ENCODE measurements at regions of chr10 and their contacts with region 1.

Region 1: GRCh38 chr10:74432841-74433594 is 282.0 kb downstream of the ADK start:
- DNase-seq: no peak
- ATAC-seq: no peak
- H3K4me3 ChIP-seq: no peak overlapping the region
- H3K4me3 Mint-ChIP-seq: no peak overlapping the region
- H3K27ac ChIP-seq: no peak overlapping the region
- H3K27ac Mint-ChIP-seq: no peak overlapping the region
- H3K4me1 ChIP-seq: no peaks in the 10 kb centered on the region
- H3K4me1 Mint-ChIP-seq: peaks cover 7 to 14% (median 11%) of the 10 kb centered on the region in 3 donors
- H3K27me3 ChIP-seq: no peaks in the 10 kb centered on the region
- H3K27me3 Mint-ChIP-seq: no peaks in the 10 kb centered on the region

Region 2: GRCh38 chr10:74474022-74474713 is 41.1 kb after region 1 on chr10:
- CTCF ChIA-PET with region 1: no interaction called
- POLR2A ChIA-PET with region 1: interaction called in 1 of 2 experiments, 14 read pairs
- DNase-seq: no peak
- ATAC-seq: no peak
- H3K4me3 ChIP-seq: no peak overlapping the region
- H3K4me3 Mint-ChIP-seq: no peak overlapping the region
- H3K27ac ChIP-seq: no peak overlapping the region
- H3K27ac Mint-ChIP-seq: no peak overlapping the region
- H3K4me1 ChIP-seq: no peaks in the 10 kb centered on the region
- H3K4me1 Mint-ChIP-seq: peaks cover 0 to 2% (median 0%) of the 10 kb centered on the region in 3 donors
- H3K27me3 ChIP-seq: no peaks in the 10 kb centered on the region
- H3K27me3 Mint-ChIP-seq: no peaks in the 10 kb centered on the region

Region 3: DNA sequence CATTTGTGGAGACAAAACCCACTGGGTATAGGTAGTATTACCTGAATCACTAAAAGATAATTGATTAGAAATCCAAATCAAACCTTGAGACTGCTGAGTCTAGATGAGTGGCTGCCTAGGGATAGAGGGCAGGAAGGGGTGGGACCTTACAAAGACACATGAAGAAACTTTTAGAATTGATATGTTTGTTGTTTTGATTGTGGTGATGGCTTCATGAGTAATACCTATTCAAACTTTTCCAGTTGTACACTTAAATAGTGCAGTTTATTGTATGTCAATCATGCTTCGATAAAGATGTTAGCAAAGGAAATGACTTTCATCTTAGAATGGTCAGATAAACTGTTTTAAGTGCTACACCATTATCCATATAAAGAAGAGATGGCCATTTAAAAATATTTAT is 204.7 kb after region 1 on chr10:
- CTCF ChIA-PET with region 1: interaction called in 1 of 2 experiments, 12 read pairs
- POLR2A ChIA-PET with region 1: no interaction called
- DNase-seq: no peak
- ATAC-seq: no peak
- H3K4me3 ChIP-seq: no peak overlapping the region
- H3K4me3 Mint-ChIP-seq: no peak overlapping the region
- H3K27ac ChIP-seq: no peak overlapping the region
- H3K27ac Mint-ChIP-seq: no peak overlapping the region
- H3K4me1 ChIP-seq: no peaks in the 10 kb centered on the region
- H3K4me1 Mint-ChIP-seq: no peaks in the 10 kb centered on the region
- H3K27me3 ChIP-seq: no peaks in the 10 kb centered on the region
- H3K27me3 Mint-ChIP-seq: no peaks in the 10 kb centered on the region

Region 4: DNA sequence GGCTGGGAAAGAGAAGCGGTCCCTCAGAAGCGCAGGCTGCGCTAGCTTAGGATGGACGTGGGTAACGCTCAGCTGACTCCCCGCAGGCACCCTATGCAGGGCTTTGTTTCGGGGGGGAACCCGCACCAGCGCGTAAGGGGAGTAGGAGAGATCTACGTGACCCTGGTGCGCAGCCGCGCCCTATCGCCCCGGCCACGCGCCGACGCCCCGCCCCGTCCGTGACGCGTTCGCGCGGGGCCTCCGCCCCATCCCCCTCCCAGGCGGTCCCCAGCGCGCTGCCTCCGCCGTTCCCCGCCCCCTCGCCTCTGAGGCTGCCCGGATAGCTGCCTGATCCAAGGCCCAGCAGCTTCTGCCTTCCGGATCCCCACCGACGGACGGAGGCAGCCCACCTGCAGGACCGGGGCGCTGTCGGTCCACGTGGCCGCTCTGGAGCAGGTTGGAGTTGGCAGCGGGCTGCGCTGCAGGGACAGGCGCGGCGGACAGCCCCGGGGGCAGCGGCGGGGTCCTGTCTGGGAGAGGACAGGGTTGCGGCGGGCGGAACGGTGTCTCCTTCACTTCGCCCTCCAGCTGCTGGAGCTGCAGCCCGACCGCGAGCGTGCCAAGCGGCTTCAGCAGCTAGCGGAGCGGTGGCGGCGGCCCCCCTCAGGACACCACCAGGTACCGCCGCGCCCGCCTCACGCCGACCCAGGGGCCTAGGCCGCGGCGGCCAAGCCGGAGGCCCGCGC is 777.4 kb after region 1 on chr10 and contains the start of gene VDAC2:
- CTCF ChIA-PET with region 1: no interaction called
- POLR2A ChIA-PET with region 1: no interaction called
- DNase-seq: peak; percentile 88 to 99 (median 93)
- ATAC-seq: peak; percentile 87 to 94 (median 92)
- H3K4me3 ChIP-seq: peak within 1 kb of the TSS; percentile 91 to 94
- H3K4me3 Mint-ChIP-seq: peak within 1 kb of the TSS; percentile 90 to 100 (median 98)
- H3K27ac ChIP-seq: peak within 1 kb of the TSS; percentile 99
- H3K27ac Mint-ChIP-seq: peak within 1 kb of the TSS; percentile 100
- H3K4me1 ChIP-seq: peaks cover 14 to 33% of the 10 kb centered on the region in 2 experiments
- H3K4me1 Mint-ChIP-seq: peaks cover 31 to 34% (median 32%) of the 10 kb centered on the region in 3 donors
- H3K27me3 ChIP-seq: no peaks in the 10 kb centered on the region
- H3K27me3 Mint-ChIP-seq: no peaks in the 10 kb centered on the region
- total RNA-seq, gene VDAC2: 82.8 to 111 (median 86.8) TPM

Measured in T-cell (primary cell).